T-cell (primary cell): ENCODE measurements at regions of chr4 and their contacts with region 1.

Region 1: GRCh38 chr4:142696334-142697122 is 149.6 kb downstream of the INPP4B start:
- DNase-seq: peak in 23 of 35 experiments; percentile 2 to 55 (median 23)
- ATAC-seq: peak; percentile 79 to 86 (median 81)
- H3K4me3 ChIP-seq: no peak overlapping the region
- H3K4me3 Mint-ChIP-seq: peak overlapping the region in 2 of 3 donors; percentile 43 to 51
- H3K27ac ChIP-seq: peak overlapping the region; percentile 71
- H3K27ac Mint-ChIP-seq: peak overlapping the region; percentile 98 to 99
- H3K4me1 ChIP-seq: peaks cover 31 to 53% of the 10 kb centered on the region in 2 experiments
- H3K4me1 Mint-ChIP-seq: peaks cover 68 to 74% (median 73%) of the 10 kb centered on the region in 3 donors
- H3K27me3 ChIP-seq: no peaks in the 10 kb centered on the region
- H3K27me3 Mint-ChIP-seq: no peaks in the 10 kb centered on the region

Region 2: GRCh38 chr4:142637614-142638013 is 58.9 kb before region 1 on chr4:
- CTCF ChIA-PET with region 1: no interaction called
- POLR2A ChIA-PET with region 1: interaction called, 3 to 12 read pairs
- DNase-seq: no peak
- ATAC-seq: no peak
- H3K4me3 ChIP-seq: no peak overlapping the region
- H3K4me3 Mint-ChIP-seq: no peak overlapping the region
- H3K27ac ChIP-seq: no peak overlapping the region
- H3K27ac Mint-ChIP-seq: no peak overlapping the region
- H3K4me1 ChIP-seq: no peaks in the 10 kb centered on the region
- H3K4me1 Mint-ChIP-seq: no peaks in the 10 kb centered on the region
- H3K27me3 ChIP-seq: no peaks in the 10 kb centered on the region
- H3K27me3 Mint-ChIP-seq: no peaks in the 10 kb centered on the region